PC-9 (cell line): ENCODE measurements at regions of chr9 and their contacts with region 1.

Region 1: GRCh38 chr9:33816327-33817252 is at the start of gene UBE2R2:
- DNase-seq: peak; percentile 82 to 84
- H3K4me3 ChIP-seq: peak within 1 kb of the TSS; percentile 74
- H3K27ac ChIP-seq: peak within 1 kb of the TSS; percentile 96
- H3K4me1 ChIP-seq: peaks cover 39% of the 10 kb centered on the region
- H3K27me3 ChIP-seq: no peaks in the 10 kb centered on the region
- CTCF ChIP-seq: no peak
- total RNA-seq, gene UBE2R2: 37.5 and 38.9 TPM in 2 replicates

Region 2: GRCh38 chr9:33233681-33234473 is 582.7 kb before region 1 on chr9:
- CTCF ChIA-PET with region 1: no interaction called
- POLR2A ChIA-PET with region 1: no interaction called
- intact Hi-C with region 1: loop called (anchors 10 kb)
- DNase-seq: peak; percentile 86 to 91
- H3K4me3 ChIP-seq: no peak overlapping the region
- H3K27ac ChIP-seq: peak overlapping the region; percentile 11; the same call in 1 of the 2 replicates
- H3K4me1 ChIP-seq: peaks cover 62% of the 10 kb centered on the region
- H3K27me3 ChIP-seq: no peaks in the 10 kb centered on the region
- CTCF ChIP-seq: no peak

Region 3: GRCh38 chr9:33737811-33738606 is 78.6 kb before region 1 on chr9:
- CTCF ChIA-PET with region 1: no interaction called
- POLR2A ChIA-PET with region 1: no interaction called
- intact Hi-C with region 1: loop called (anchors 2 kb)
- DNase-seq: peak; percentile 38 to 43
- H3K4me3 ChIP-seq: no peak overlapping the region
- H3K27ac ChIP-seq: no peak overlapping the region
- H3K4me1 ChIP-seq: peaks cover 27% of the 10 kb centered on the region
- H3K27me3 ChIP-seq: no peaks in the 10 kb centered on the region
- CTCF ChIP-seq: peak; percentile 72

Region 4: GRCh38 chr9:33778700-33779351 is 37.8 kb before region 1 on chr9:
- CTCF ChIA-PET with region 1: interaction called, 5 read pairs
- POLR2A ChIA-PET with region 1: no interaction called
- intact Hi-C with region 1: loop called (anchors 1 kb)
- DNase-seq: peak; percentile 44 to 60
- H3K4me3 ChIP-seq: peak overlapping the region; percentile 47
- H3K27ac ChIP-seq: peak overlapping the region; percentile 84
- H3K4me1 ChIP-seq: peaks cover 62% of the 10 kb centered on the region
- H3K27me3 ChIP-seq: no peaks in the 10 kb centered on the region
- CTCF ChIP-seq: peak; percentile 85

Region 5: GRCh38 chr9:33800886-33801285 is 15.7 kb before region 1 on chr9:
- CTCF ChIA-PET with region 1: no interaction called
- POLR2A ChIA-PET with region 1: no interaction called
- intact Hi-C with region 1: no loop called
- DNase-seq: no peak
- H3K4me3 ChIP-seq: no peak overlapping the region
- H3K27ac ChIP-seq: no peak overlapping the region
- H3K4me1 ChIP-seq: no peaks in the 10 kb centered on the region
- H3K27me3 ChIP-seq: no peaks in the 10 kb centered on the region
- CTCF ChIP-seq: no peak

Region 6: DNA sequence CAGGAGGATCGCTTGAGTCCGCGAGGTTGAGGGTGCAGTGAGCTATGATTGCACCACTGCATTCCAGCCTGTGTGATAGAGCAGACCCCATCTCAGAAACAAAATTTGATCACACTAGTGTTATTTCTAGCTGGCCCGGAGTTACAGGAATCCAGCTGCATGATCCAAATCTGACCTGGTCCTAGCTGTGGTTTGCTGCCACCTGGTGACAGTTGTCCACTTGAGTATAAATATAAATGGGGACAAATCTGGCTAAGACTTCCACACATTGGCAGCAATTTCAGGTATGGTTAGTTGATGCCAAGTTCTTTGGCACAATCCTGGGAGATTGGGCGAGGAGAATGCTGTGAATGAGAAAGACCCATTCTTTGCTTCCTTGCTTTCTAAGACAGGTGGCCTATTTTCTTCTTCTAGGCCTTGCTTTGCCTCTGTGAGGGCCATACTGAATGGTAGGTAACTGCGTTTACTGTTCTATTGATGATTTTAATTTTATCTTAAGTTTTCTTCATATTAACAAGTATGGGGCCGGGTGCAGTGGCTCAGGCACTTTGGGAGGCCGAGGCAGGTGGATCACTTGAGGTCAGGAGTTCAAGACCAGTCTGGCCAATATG is 35.7 kb after region 1 on chr9:
- CTCF ChIA-PET with region 1: interaction called, 5 read pairs
- POLR2A ChIA-PET with region 1: no interaction called
- intact Hi-C with region 1: loop called (anchors 5 kb)
- DNase-seq: peak in 1 of 2 experiments; percentile 35
- H3K4me3 ChIP-seq: no peak overlapping the region
- H3K27ac ChIP-seq: no peak overlapping the region
- H3K4me1 ChIP-seq: peaks cover 19% of the 10 kb centered on the region
- H3K27me3 ChIP-seq: no peaks in the 10 kb centered on the region
- CTCF ChIP-seq: peak; percentile 70